CD8-positive, alpha-beta T cell (primary cell): ENCODE measurements at regions of chr14 and their contacts with region 1.

Region 1: DNA sequence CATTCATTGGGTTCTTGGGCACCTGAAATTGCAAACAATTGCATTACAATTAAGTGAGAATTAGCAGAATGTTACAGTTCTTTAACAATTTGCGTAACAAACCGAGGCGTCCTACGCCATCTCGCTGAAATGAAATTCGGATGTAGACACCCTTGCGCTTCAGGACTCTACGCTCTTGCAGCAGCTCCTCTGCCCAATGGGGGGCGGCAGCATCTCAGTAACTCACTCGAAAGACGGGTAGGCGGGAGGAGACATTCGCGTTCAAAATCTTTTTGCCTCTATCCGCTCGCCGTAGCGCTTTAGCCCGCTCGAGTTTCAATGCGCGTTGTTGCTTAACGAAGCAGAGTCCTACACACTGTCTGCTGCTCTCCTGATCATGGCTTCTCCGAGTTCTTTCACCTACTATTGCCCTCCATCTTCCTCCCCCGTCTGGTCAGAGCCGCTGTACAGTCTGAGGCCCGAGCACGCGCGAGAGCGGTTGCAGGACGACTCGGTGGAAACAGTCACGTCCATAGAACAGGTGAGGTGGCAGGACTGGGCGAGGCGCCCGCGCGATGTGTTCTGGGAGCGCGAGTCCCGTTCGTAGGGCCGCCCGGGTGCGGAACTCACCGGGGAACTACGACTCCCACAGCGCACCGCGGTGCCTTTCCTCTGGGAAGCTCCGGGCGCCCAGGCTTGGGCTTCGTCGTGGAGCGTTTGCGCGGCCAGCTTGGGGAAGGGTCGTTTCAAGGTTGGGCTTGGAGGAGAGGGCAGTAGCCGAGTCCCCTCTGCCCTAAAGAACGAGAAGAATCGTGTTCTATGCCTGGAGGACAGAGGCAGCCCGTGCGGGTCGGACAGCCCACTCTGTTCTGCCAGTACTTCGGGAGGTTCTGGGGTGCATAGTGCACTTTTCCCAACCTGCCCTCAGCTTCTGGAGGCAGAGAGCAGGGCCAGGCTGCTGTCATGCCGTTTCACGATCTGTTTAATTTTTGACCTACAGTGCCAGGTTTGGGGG is at the start of gene FNTB:
- DNase-seq: peak; percentile 85 to 98 (median 93)
- ATAC-seq: peak; percentile 89
- H3K4me3 ChIP-seq: peak within 1 kb of the TSS; percentile 78 to 79
- H3K4me3 Mint-ChIP-seq: peak within 1 kb of the TSS; percentile 99
- H3K27ac ChIP-seq: peak within 1 kb of the TSS; percentile 57 to 73
- H3K27ac Mint-ChIP-seq: peak within 1 kb of the TSS; percentile 98
- H3K4me1 ChIP-seq: peaks cover 44% of the 10 kb centered on the region
- H3K4me1 Mint-ChIP-seq: peaks cover 55% of the 10 kb centered on the region
- H3K27me3 ChIP-seq: no peaks in the 10 kb centered on the region
- H3K27me3 Mint-ChIP-seq: peaks cover 7% of the 10 kb centered on the region
- CTCF ChIP-seq: peak; percentile 68
- total RNA-seq, gene FNTB: 6.3 to 7.7 TPM

Region 2: DNA sequence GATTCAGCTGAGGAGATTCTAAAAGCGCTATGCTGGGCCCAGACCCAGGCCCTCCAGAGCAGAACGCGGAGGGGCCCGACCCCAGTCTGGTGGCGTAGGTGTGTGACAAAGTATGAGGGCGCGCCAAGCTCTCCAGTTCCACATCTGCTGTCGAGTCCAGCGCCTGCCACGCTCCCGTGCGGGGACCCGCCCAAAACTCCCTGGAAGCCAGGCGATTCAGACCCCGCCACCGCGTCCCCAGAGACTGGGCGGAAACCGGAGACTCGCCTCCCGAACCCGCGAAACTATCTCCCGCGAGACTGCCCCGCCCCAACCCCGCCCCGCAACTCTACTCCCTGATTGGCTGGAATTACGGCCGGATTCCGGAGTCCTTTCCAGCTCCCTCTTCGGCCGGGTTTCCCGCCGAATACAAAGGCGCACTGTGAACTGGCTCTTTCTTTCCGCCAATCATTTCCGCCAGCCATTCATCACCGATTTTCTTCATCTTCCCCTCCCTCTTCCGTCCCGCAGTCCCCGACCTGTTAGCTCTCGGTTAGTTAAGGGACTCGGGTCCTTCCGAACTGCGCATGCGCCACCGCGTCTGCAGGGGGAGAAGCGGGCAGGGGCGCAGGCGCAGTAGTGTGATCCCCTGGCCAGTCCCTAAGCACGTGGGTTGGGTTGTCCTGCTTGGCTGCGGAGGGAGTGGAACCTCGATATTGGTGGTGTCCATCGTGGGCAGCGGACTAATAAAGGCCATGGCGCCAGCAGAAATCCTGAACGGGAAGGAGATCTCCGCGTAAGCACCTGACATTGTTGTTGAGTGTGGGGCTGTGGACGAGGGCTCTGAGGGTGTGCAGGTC is 599.0 kb before region 1 on chr14 and contains the start of gene MTHFD1:
- CTCF ChIA-PET with region 1: no interaction called
- POLR2A ChIA-PET with region 1: no interaction called
- intact Hi-C with region 1: loop called in 1 of 2 experiments (anchors 10 kb)
- DNase-seq: peak; percentile 88 to 98 (median 97)
- ATAC-seq: peak; percentile 84
- H3K4me3 ChIP-seq: peak within 1 kb of the TSS; percentile 79 to 80
- H3K4me3 Mint-ChIP-seq: peak within 1 kb of the TSS; percentile 99
- H3K27ac ChIP-seq: peak within 1 kb of the TSS; percentile 33 to 50
- H3K27ac Mint-ChIP-seq: peak within 1 kb of the TSS; percentile 95
- H3K4me1 ChIP-seq: peaks cover 20% of the 10 kb centered on the region
- H3K4me1 Mint-ChIP-seq: peaks cover 37% of the 10 kb centered on the region
- H3K27me3 ChIP-seq: no peaks in the 10 kb centered on the region
- H3K27me3 Mint-ChIP-seq: no peaks in the 10 kb centered on the region
- CTCF ChIP-seq: no peak
- total RNA-seq, gene MTHFD1: 14.4 to 15.6 TPM

Region 3: GRCh38 chr14:64914237-64914971 is 72.5 kb before region 1 on chr14 and contains the start of gene CHURC1:
- CTCF ChIA-PET with region 1: interaction called, 6 read pairs
- POLR2A ChIA-PET with region 1: interaction called, 17 read pairs
- intact Hi-C with region 1: loop called (anchors 1 kb)
- DNase-seq: peak; percentile 91 to 99 (median 97)
- ATAC-seq: peak; percentile 92
- H3K4me3 ChIP-seq: peak within 1 kb of the TSS; percentile 86 to 98
- H3K4me3 Mint-ChIP-seq: peak within 1 kb of the TSS; percentile 85
- H3K27ac ChIP-seq: peak within 1 kb of the TSS; percentile 98 to 99
- H3K27ac Mint-ChIP-seq: peak within 1 kb of the TSS; percentile 91
- H3K4me1 ChIP-seq: peaks cover 42% of the 10 kb centered on the region
- H3K4me1 Mint-ChIP-seq: peaks cover 47% of the 10 kb centered on the region
- H3K27me3 ChIP-seq: no peaks in the 10 kb centered on the region
- H3K27me3 Mint-ChIP-seq: no peaks in the 10 kb centered on the region
- CTCF ChIP-seq: no peak
- total RNA-seq, gene CHURC1: 43.9 to 46.7 TPM

Region 4: DNA sequence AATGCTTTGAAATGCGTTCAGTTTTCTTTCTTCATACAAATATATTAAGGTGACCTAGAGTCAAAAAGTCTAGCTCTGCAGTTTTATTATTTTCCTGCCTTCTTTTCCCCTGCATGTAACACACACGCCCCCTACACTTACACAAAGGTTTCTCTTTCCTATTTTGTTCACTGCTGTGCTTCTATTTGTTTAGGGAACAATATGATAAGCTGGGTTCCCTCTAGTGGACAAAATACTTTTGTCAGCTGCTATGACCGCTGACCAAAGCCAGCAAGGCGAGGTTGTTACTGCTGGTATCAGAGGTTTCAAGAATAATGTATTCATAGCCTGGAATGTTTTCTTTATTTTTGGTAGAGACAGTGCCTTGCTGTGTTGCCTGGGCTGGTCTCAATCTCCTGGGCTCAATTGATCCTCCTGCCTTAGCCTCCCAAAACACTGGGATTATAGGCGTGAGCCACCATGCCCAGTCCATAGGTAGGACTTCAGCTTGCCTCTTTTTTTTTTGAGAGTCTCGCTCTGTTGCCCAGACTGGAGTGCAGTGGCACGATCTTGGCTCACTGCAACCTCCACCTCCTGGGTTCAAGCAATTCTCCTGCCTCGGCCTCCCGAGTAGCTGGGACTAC is 33.2 kb after region 1 on chr14:
- CTCF ChIA-PET with region 1: interaction called, 7 read pairs
- POLR2A ChIA-PET with region 1: interaction called, 6 read pairs
- intact Hi-C with region 1: loop called (anchors 1 to 2 kb)
- DNase-seq: peak in 2 of 9 experiments; percentile 19 to 40
- ATAC-seq: no peak
- H3K4me3 ChIP-seq: no peak overlapping the region
- H3K4me3 Mint-ChIP-seq: no peak overlapping the region
- H3K27ac ChIP-seq: no peak overlapping the region
- H3K27ac Mint-ChIP-seq: no peak overlapping the region
- H3K4me1 ChIP-seq: no peaks in the 10 kb centered on the region
- H3K4me1 Mint-ChIP-seq: no peaks in the 10 kb centered on the region
- H3K27me3 ChIP-seq: no peaks in the 10 kb centered on the region
- H3K27me3 Mint-ChIP-seq: no peaks in the 10 kb centered on the region
- CTCF ChIP-seq: no peak

Region 5: DNA sequence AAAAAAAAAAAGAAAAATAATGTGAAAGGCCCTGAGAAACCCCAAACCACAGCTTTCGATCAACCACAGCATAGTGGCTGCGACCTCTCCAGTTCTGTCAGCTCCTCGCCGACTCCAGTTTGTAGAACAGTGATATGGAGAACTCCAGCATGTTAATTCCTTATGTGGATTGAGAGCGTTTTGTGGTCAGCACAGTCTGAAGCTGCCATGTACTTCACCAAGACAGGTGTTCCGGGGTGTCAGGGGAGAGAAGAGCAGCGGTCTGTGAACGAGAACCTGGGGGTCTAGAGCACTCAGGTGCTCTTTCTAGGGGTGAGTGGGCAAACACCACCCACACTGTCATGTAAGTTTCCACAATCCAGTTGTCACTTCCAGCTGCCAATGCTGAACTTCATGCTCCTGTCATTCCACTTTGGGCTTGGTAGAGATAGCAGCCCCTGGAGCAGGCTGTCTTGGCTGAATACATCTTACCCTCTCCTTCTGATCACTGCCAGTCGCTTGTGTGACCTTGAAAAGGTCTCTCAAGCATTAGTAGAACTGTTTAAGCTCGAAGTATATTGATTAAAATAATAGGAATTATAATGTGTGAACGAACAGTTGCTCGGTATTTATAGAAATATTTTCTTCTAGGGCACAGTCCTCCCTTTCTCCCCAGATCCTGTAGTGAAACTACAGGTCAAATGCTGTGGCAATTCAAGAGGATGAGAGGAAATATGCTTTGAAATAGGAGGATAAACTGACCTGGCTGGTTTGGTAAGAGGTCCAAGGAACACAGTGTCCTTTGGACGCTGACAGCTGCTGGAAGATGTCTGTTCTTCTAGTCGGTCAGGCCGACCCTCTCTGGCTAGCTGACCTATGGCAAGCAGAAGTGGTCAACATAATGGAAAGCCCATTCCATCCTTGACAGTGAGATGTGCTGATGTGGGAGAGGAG is 131.2 kb after region 1 on chr14:
- CTCF ChIA-PET with region 1: no interaction called
- POLR2A ChIA-PET with region 1: no interaction called
- intact Hi-C with region 1: no loop called
- DNase-seq: no peak
- ATAC-seq: no peak
- H3K4me3 ChIP-seq: no peak overlapping the region
- H3K4me3 Mint-ChIP-seq: no peak overlapping the region
- H3K27ac ChIP-seq: no peak overlapping the region
- H3K27ac Mint-ChIP-seq: no peak overlapping the region
- H3K4me1 ChIP-seq: no peaks in the 10 kb centered on the region
- H3K4me1 Mint-ChIP-seq: no peaks in the 10 kb centered on the region
- H3K27me3 ChIP-seq: no peaks in the 10 kb centered on the region
- H3K27me3 Mint-ChIP-seq: peaks cover 2% of the 10 kb centered on the region
- CTCF ChIP-seq: no peak

Region 6: GRCh38 chr14:65847075-65847847 is 860.4 kb after region 1 on chr14:
- CTCF ChIA-PET with region 1: no interaction called
- POLR2A ChIA-PET with region 1: no interaction called
- intact Hi-C with region 1: loop called (anchors 10 kb)
- DNase-seq: peak; percentile 41 to 93 (median 70)
- ATAC-seq: peak; percentile 87
- H3K4me3 ChIP-seq: peak overlapping the region; percentile 13 to 21
- H3K4me3 Mint-ChIP-seq: peak overlapping the region; percentile 71
- H3K27ac ChIP-seq: peak overlapping the region; percentile 57 to 84
- H3K27ac Mint-ChIP-seq: peak overlapping the region; percentile 92
- H3K4me1 ChIP-seq: peaks cover 90% of the 10 kb centered on the region
- H3K4me1 Mint-ChIP-seq: peaks cover 85% of the 10 kb centered on the region
- H3K27me3 ChIP-seq: no peaks in the 10 kb centered on the region
- H3K27me3 Mint-ChIP-seq: no peaks in the 10 kb centered on the region
- CTCF ChIP-seq: no peak